ENCODE measurements at regions of chr9 and their contacts with region 1.

Region 1: DNA sequence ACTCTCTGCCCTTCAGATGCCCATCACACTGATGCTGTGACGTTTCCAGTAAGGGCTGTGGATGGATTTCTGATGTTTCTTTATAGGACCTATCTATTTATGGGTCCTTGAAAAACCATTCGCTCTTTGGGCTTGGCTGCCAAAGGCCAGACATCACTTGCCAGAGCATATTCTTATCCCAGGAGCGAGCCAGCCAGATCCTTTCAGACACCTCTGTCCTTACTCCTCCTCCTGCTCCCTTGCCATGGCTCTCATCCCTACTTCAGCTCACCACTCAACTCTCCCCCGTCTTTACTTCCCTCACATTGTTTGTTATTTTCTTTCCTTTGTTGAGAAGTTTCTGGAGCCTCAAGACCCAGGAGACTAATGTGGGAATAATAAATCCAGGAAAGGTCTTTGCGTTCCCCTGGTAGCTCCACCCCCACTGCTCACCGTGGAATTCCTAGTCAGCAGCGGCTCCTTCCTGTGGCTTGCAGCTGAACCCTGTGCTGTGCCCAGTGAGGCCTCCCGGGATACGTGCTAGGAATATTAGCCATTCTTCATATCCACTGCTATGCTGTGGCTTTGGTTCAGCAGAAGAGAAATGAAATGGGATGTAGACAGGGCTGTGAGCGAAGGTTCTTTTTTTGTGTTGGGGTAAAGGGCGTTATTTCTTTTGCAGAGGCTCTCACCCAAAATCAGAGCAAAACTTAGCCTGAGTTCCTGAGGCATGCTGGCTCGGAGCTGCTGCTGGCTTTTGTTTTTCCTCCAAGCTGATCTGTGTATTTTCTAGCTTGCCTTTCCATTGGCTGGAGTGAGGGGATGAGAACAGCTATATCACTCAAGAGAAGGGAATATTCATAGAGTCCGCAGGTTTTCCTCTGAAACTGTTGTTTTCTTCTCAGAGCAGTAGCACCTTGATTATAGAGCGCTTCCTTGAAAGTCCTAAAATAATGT is 171.1 kb downstream of the SAXO1 start:
- DNase-seq: peak in 1 of 2 donors; percentile 78
- H3K4me3 ChIP-seq: peak overlapping the region; percentile 1 to 9
- H3K27ac ChIP-seq: peak overlapping the region; percentile 71 to 82
- H3K4me1 ChIP-seq: peaks cover 0 to 20% of the 10 kb centered on the region in 2 donors
- H3K27me3 ChIP-seq: no peaks in the 10 kb centered on the region
- CTCF ChIP-seq: peak in 1 of 3 experiments; percentile 43

Region 2: GRCh38 chr9:18786911-18787650 is 74.8 kb before region 1 on chr9:
- intact Hi-C with region 1: loop called (anchors 2 kb)
- DNase-seq: no peak
- H3K4me3 ChIP-seq: no peak overlapping the region
- H3K27ac ChIP-seq: peak overlapping the region; percentile 45 to 77
- H3K4me1 ChIP-seq: peaks cover 12 to 27% of the 10 kb centered on the region in 2 donors
- H3K27me3 ChIP-seq: no peaks in the 10 kb centered on the region
- CTCF ChIP-seq: no peak

Measured in ascending aorta (tissue), 2 donors.